Sciatic nerve (tissue), 2 donors: ENCODE measurements at regions of chr19 and their contacts with region 1.

Region 1: DNA sequence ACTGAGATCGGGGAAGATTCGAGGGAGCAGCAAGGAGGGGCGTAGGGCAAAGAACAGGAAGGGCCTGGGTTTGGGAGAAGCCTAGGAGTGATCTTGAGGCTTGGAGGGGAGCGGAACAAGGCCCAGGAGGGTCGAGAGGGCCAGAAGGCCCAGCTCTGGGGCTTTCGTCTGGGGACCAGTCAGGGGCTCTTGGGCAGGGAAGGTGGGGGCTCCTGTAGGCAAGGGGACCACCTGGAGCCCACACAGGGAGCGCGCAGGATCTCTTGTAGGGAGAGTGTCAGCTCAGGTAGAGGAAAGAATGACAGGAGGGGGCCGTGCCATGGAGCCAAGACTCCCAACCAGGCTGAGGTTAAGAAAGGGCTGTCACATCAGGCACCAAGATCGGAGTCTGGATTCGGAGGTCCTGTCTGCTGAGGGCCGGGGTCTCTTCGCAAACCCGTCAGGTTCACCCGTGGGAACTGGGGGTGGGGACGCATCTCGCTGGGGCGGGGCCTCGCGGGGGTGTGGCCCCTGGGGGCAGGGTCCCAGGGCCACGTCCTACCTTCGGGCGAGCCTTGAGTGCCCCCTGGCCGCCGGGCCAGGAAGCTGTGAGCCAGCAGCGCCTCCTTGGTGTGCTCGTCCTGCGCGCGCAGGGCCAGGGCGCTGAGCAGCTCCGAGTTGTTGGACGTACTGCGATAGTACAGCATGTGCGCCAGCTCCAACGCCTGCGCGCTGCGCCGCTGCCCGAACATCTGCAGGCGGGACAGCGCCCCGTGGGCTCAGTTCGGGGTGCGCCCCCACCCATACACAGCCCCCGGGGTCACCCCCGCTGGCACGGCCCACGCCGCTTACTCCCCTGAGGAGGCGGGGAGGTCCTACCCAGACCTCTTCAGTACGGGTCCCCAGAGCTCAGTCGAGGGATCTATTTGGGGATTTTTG is 8.4 kb downstream of the EMP3 start:
- DNase-seq: peak; percentile 92
- ATAC-seq: peak; percentile 87

Region 2: GRCh38 chr19:48290771-48291488 is 42.8 kb before region 1 on chr19:
- intact Hi-C with region 1: loop called (anchors 1 kb)
- DNase-seq: peak; percentile 91
- ATAC-seq: peak; percentile 95

Region 3: GRCh38 chr19:48318306-48318995 is 15.3 kb before region 1 on chr19:
- intact Hi-C with region 1: loop called (anchors 2 kb)
- DNase-seq: no peak
- ATAC-seq: no peak

Region 4: DNA sequence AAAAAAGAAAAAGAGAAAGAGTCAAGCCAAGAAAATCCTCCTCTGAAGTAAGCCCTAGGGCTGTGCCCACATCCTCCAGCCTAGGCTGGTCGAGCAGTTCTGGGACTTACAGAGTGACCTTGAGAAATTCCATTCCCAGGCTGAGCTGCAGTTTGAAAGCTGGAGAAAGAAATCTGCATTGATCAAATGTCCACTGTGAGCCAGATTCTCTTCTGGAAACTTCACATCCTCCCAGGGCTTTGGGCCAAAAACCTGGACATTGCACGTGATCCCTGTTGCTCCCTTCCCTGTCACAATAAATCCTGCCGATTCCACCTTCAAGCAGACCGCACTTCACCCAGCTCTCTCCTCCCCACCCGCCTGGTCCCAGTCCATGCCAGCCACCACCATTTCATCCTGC is 14.3 kb after region 1 on chr19:
- intact Hi-C with region 1: no loop called
- DNase-seq: no peak
- ATAC-seq: no peak